Activated T-helper 2 cell treated with anti-CD3 and anti-CD28 coated beads, Interferon-gamma antibody, Interleukin-2, Interleukin-4, amounts not matched to agents 10 μg/mL and 5 μg/mL and 100 μg/mL, durations not matched to agents 14 hours and 24 hours and 36 hours (primary cell): ENCODE measurements at regions of chr2 and their contacts with region 1.

Region 1: DNA sequence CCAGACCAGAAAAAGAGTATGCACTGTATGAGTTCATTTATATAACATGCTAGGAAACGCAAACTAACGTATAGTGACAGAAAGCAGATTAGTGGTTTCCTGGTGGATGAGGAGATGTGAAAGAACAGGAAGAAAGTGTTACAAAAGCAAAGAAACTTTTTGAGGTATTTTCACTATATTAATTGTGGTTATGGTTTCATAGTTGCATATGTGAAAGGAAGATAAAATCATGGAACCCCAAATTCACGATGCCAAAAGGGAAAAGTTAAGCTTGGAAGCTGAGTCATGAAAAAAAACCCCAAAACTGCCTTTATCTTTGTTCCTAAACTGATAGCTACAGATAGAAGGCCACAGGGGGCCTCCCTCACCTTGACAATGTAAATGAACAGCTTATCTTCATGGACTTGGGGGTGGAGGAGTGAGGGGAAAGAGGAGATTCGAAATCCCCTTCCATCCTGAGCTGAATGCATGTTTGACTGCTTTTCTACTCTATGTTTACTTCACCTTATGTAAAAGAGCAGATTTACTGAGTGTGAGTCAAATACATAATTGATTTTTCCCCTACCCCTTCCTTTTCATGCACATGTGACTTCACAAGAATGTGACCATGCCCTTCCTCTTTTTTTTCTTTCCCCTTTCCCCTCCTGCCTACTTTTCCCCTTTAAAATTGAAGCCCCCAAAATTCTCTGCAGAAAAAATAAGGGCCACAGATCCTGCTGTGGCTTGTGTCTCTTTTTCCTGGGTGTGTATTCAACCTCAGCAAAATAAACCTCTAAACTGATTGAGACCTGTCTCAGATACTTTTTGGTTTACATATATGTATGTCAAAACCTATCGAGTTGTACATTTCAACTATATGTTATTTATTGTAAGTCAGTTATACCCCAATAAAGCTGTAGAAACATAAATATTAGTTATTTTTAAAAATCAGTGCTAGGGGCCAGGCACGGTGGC is 100.1 kb upstream of the TLK1 start:
- DNase-seq: no peak
- H3K4me3 Mint-ChIP-seq: no peak overlapping the region
- H3K27ac Mint-ChIP-seq: peak overlapping the region; percentile 51
- H3K4me1 Mint-ChIP-seq: peaks cover 33% of the 10 kb centered on the region
- H3K27me3 Mint-ChIP-seq: peaks cover 2% of the 10 kb centered on the region

Region 2: GRCh38 chr2:171086352-171087290 is 174.1 kb before region 1 on chr2:
- intact Hi-C with region 1: loop called (anchors 5 kb)
- DNase-seq: peak; percentile 33
- H3K4me3 Mint-ChIP-seq: peak overlapping the region; percentile 78
- H3K27ac Mint-ChIP-seq: peak overlapping the region; percentile 69
- H3K4me1 Mint-ChIP-seq: peaks cover 61% of the 10 kb centered on the region
- H3K27me3 Mint-ChIP-seq: no peaks in the 10 kb centered on the region

Region 3: DNA sequence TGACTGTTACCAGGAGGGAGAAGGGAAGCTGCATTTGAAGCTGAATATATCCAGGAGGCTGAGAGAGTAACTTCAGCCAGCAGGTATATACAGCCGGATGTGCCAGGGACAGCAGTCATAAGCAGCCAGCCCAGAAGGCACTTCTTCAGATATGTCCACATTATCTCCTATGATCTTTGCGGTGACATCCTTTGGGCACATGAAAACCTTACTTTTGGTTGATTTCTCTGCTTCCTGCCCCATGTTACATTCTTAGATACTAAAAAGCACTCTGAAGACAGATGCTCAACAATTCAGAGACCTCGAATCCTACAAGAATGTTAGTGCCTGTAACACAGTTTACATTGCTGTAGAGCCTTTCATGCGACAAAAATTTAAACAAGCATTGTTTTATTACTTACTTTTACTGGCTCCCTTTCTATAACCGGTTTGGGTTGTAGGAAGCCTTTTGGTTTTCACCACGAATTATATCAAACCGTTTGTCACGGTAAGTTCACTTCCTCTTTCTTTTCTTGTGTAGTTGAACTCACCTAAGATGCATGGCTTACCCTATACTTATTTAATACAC is 49.8 kb before region 1 on chr2:
- intact Hi-C with region 1: loop called (anchors 1 kb)
- DNase-seq: peak; percentile 54
- H3K4me3 Mint-ChIP-seq: peak overlapping the region; percentile 45
- H3K27ac Mint-ChIP-seq: peak overlapping the region; percentile 75
- H3K4me1 Mint-ChIP-seq: peaks cover 38% of the 10 kb centered on the region
- H3K27me3 Mint-ChIP-seq: no peaks in the 10 kb centered on the region

Region 4: DNA sequence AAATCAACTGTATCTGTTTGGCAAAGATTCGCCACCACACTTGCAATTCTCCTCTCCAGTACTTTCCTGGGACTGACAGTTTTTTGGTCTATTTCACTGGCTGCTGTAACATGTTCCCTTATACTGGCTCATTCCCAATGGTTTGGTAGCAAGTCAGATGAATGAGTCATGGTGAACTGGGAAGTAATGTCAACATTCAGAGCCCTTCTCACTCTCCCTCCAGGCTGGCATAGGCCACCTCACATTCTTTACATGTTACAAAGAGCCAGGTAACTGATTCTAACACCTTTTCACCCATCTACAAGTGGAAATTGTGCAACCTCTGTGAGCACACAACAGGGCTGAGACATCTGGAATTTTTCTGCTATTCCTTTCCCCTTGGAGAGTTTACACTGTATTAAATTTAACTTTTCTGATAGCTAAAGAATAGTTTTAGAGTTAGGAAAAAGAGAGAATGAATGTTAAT is 11.3 kb after region 1 on chr2:
- intact Hi-C with region 1: no loop called
- DNase-seq: no peak
- H3K4me3 Mint-ChIP-seq: no peak overlapping the region
- H3K27ac Mint-ChIP-seq: no peak overlapping the region
- H3K4me1 Mint-ChIP-seq: no peaks in the 10 kb centered on the region
- H3K27me3 Mint-ChIP-seq: peaks cover 6% of the 10 kb centered on the region

Region 5: DNA sequence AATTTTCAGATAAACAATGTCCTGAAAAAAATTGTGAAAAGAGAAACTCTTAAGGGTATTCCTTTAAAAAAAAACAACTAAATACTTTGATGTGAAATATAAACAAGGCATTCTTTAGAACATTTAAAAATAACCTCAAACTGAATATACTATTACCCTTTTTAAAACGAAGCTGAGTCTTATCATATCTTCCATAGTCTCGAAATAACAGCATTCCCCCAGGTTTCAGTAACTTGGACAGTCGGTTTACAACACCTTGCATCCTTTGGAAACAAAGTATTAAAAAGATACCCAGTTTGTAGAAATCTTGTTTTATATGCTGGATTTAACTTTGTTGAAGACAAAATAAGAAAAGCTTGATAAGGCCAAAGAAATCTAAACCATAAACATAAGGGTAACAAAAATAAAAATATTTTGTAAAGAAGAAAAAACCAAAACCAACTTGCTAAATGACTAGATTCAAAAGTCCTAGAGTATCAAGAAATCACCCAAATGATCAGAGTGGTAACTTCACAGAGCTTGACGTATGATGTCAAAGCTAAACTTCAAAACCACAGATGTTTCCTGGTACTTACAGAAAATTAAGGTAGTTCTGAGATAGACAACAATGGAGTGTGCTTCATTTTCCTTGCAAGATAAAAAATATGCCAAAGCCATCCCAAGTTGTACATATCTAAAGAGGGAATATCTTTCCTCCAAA is 65.3 kb after region 1 on chr2:
- intact Hi-C with region 1: loop called (anchors 2 kb)
- DNase-seq: no peak
- H3K4me3 Mint-ChIP-seq: peak overlapping the region; percentile 54
- H3K27ac Mint-ChIP-seq: peak overlapping the region; percentile 92
- H3K4me1 Mint-ChIP-seq: peaks cover 44% of the 10 kb centered on the region
- H3K27me3 Mint-ChIP-seq: no peaks in the 10 kb centered on the region

Region 6: GRCh38 chr2:171433763-171434670 is 173.3 kb after region 1 on chr2 and contains the starts of genes DCAF17 and METTL8:
- intact Hi-C with region 1: loop called (anchors 1 kb)
- DNase-seq: peak; percentile 93
- H3K4me3 Mint-ChIP-seq: peak within 1 kb of the TSS; percentile 89
- H3K27ac Mint-ChIP-seq: peak within 1 kb of the TSS; percentile 91
- H3K4me1 Mint-ChIP-seq: peaks cover 32% of the 10 kb centered on the region
- H3K27me3 Mint-ChIP-seq: no peaks in the 10 kb centered on the region
- total RNA-seq, gene DCAF17: 22.6 and 23.7 TPM in 2 replicates
- total RNA-seq, gene METTL8: 38.2 and 39.9 TPM in 2 replicates